Sigmoid colon (tissue), 7 donors: ENCODE measurements at regions of chr11 and their contacts with region 1.

Region 1: DNA sequence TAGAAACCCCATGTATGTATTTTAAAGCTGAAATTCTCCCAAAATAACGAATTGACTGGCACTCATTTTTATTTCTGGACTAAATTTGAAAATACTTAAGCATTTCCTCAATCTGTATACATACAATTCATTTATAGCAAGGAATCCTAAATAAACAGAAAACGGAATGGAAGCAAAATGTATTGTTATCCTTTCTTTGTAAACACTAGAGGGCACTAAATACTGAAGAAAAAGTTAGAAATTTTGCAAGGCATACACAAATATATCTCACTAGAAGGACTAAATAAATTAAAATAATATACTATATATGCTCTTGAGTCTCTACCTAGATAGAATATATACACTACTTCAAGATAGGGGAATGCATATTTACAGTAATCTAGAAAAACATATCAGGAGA is 23.1 kb upstream of the ANO5 start:
- DNase-seq: no peak
- H3K4me3 ChIP-seq: no peak overlapping the region
- H3K27ac ChIP-seq: no peak overlapping the region
- H3K4me1 ChIP-seq: no peaks in the 10 kb centered on the region
- H3K27me3 ChIP-seq: peaks cover 0 to 6% (median 0%) of the 10 kb centered on the region in 3 donors
- CTCF ChIP-seq: peak in 1 of 4 experiments; percentile 26
- EP300 ChIP-seq: no peak
- POLR2A ChIP-seq: no peak

Region 2: DNA sequence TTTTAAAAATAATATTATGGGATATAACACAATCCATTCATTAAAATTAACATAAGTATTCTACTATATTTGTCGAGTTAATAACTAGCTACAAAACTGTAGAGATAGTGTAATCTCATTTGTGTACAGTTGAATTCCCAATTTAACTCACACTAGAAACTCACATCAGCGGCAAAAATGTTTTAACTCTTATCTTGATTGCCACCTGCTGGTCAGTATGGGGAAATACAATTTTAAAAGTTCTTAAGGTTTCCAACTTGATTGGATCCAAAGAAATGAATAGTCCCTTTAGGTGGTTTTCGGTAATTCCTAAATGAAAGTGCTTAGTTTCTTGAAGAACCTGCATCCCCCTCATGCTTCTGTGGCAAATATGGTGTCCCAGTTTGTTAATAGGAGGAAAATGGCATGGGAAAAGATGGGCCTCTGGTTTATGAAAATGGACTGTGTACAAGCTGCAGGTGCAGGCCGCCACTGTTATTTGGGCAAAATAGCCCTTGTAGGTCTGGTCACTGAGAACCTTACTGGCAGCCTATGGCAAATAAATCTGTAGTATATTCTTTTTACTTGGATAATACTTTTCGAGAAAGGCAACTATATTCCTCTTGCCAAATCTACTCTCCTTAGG is 134.6 kb after region 1 on chr11:
- intact Hi-C with region 1: loop called (anchors 5 kb)
- DNase-seq: no peak
- H3K4me3 ChIP-seq: no peak overlapping the region
- H3K27ac ChIP-seq: no peak overlapping the region
- H3K4me1 ChIP-seq: no peaks in the 10 kb centered on the region
- H3K27me3 ChIP-seq: no peaks in the 10 kb centered on the region
- CTCF ChIP-seq: peak in 3 of 4 experiments; percentile 35 to 75 (median 40)
- EP300 ChIP-seq: no peak
- POLR2A ChIP-seq: no peak